Pancreas (tissue), 10 donors: ENCODE measurements at regions of chr7 and their contacts with region 1.

Region 1: DNA sequence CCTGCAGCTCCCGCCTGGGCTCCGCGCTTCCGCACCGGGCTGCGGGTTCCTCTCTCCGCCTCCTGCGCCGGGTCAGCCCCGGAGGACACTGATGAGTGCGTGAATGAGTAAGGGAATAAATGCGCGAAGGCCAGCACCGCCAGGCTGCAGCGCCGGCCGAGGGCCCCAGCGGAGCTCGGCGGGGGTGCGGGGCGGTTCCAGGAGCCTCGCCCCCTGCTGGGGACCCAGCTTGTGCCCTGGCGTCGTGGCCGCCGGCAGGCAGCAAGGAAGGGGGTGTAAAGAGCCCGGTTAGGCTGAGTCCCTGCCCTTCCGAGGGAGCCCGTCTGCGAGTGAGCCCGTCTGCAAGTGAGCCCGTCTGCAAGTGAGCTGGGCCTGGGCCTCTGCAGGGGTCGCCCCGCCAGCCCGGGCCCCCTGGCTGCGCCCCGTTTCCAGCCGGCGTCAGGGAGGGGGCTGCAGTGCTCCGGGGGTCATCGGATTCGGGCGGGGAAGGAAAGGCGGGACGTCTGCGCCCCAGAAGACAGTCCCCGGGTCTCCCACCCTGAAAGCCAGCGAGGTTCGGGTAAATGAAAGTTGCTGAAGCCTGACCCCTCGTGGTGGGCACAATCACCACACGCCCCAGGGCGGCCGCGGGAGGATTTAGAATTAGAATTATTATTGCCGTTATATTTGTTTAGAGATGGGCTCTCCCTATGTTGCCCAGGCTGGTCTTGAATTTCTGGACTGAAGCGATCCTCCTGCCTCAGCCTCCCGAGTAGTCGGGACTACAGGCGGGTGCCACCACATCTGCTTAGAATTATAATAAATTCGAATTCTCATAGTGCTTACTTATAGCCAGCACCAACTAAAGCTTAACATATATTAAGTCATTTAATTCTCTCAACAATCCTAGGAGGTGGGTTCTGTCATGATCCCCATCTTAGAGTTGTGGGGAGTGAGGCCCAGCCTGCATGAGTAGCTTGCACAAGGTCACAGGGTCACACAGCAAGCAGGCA is 8.6 kb upstream of the CRYGN start:
- DNase-seq: peak; percentile 53 to 87 (median 66)
- ATAC-seq: peak; percentile 88 to 97 (median 96)
- H3K4me3 ChIP-seq: peak overlapping the region; percentile 26 to 54 (median 40)
- H3K27ac ChIP-seq: no peak overlapping the region
- H3K4me1 ChIP-seq: no peaks in the 10 kb centered on the region
- H3K27me3 ChIP-seq: no peaks in the 10 kb centered on the region
- CTCF ChIP-seq: peak; percentile 64 to 73 (median 72)

Region 2: DNA sequence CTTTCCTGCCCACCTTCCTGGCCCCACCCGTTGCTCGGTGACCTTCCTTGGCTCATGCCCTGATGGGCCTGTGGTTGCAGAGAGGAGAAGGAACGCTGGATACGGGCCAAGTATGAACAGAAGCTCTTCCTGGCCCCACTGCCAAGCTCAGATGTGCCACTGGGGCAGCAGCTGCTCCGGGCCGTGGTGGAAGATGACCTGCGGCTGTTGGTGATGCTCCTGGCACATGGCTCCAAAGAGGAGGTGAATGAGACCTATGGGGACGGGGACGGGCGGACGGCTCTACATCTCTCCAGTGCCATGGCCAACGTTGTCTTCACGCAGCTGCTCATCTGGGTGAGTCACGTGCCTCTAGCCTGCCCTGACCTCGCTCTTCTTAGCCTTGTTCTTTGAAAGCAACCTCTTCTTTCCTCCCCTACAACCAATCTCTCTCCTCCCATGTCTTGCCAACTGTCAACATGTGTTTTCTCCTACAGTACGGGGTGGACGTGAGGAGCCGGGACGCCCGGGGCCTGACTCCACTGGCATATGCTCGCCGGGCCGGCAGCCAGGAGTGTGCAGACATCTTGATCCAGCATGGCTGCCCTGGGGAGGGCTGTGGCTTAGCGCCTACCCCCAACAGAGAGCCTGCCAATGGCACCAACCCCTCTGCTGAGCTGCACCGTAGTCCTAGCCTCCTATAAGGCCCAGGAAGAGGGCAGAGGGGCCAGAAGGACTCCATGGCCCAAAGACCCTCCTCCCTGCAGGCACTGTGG is 305.1 kb before region 1 on chr7:
- intact Hi-C with region 1: no loop called
- DNase-seq: peak in 2 of 6 donors; percentile 10 to 19
- ATAC-seq: no peak
- H3K4me3 ChIP-seq: no peak overlapping the region
- H3K27ac ChIP-seq: no peak overlapping the region
- H3K4me1 ChIP-seq: no peaks in the 10 kb centered on the region
- H3K27me3 ChIP-seq: no peaks in the 10 kb centered on the region
- CTCF ChIP-seq: no peak

Region 3: GRCh38 chr7:151315038-151315655 is 133.4 kb before region 1 on chr7:
- intact Hi-C with region 1: loop called in 2 of 3 experiments (anchors 5 kb)
- DNase-seq: peak in 5 of 6 donors; percentile 60 to 80 (median 67)
- ATAC-seq: peak; percentile 89 to 97 (median 94)
- H3K4me3 ChIP-seq: peak overlapping the region in 1 of 4 donors; percentile 18
- H3K27ac ChIP-seq: no peak overlapping the region
- H3K4me1 ChIP-seq: no peaks in the 10 kb centered on the region
- H3K27me3 ChIP-seq: no peaks in the 10 kb centered on the region
- CTCF ChIP-seq: peak; percentile 74 to 82 (median 76)

Region 4: GRCh38 chr7:151368136-151368571 is 80.4 kb before region 1 on chr7:
- intact Hi-C with region 1: loop called in 2 of 3 experiments (anchors 2 to 5 kb)
- DNase-seq: peak; percentile 73 to 91 (median 84)
- ATAC-seq: peak; percentile 93 to 99 (median 98)
- H3K4me3 ChIP-seq: no peak overlapping the region
- H3K27ac ChIP-seq: no peak overlapping the region
- H3K4me1 ChIP-seq: no peaks in the 10 kb centered on the region
- H3K27me3 ChIP-seq: no peaks in the 10 kb centered on the region
- CTCF ChIP-seq: peak; percentile 85 to 94 (median 90)